ENCODE measurements at regions of chr5 and their contacts with region 1.

Region 1: DNA sequence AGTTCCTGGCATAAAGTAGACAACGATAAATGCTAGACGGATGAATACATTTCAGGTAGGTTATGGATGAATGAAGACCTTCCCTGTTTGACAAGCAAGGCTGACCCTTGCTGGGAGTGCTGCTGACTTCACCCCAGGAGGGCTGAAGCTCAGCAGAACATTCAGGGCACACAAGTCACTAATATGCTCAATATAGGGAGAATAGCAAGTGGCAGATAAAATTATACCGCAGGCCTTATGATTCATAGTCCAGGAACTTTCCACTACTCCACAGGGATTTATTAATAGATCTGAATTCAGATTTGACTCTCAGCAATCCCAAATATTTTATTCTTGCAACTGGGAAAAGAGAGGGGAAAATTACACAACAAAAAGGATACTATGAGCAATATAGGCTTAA is 38.2 kb upstream of the GRAMD2B start:
- DNase-seq: peak; percentile 52 to 93
- H3K4me3 ChIP-seq: peak overlapping the region; percentile 32; the same call in 1 of the 2 replicates
- H3K27ac ChIP-seq: peak overlapping the region; percentile 89
- H3K4me1 ChIP-seq: peaks cover 53% of the 10 kb centered on the region
- H3K27me3 ChIP-seq: no peaks in the 10 kb centered on the region
- CTCF ChIP-seq: no peak

Region 2: DNA sequence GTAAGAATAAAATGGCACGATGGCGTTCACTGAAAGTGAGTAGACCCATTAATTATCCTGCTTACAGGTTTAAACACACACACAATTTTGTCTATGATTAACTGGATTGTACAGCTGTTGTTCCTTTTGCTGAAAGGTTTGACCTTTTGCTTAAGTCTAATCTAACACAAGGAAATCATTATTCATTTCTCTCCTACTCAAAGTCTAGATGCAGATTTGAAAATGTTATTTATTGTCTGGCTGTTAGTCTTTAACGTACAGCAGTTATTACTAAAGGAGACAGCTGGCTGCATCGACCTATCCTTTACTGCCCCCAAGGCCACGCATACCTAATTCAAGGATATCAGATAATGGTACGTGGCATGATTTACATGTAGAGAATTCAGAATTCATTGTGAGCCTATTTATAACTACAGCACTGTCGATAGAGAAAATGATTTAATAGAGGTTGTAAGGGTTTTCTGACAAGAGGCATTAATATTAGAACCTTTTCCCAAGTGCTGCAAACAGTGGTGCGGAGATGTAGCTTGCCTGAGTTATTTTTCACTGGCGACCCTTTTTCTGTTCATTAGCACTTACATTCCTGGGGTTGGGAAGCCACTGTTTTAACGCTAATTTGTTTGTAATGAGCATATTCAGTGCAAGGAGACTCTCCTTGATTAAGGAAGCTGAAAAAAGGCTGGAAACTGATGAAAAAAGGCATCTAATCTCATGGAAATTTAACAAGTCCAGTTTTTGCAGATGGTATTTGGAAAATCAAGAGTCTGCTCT is 330.2 kb before region 1 on chr5:
- CTCF ChIA-PET with region 1: no interaction called
- POLR2A ChIA-PET with region 1: no interaction called
- intact Hi-C with region 1: no loop called
- DNase-seq: no peak
- H3K4me3 ChIP-seq: no peak overlapping the region
- H3K27ac ChIP-seq: no peak overlapping the region
- H3K4me1 ChIP-seq: no peaks in the 10 kb centered on the region
- H3K27me3 ChIP-seq: no peaks in the 10 kb centered on the region
- CTCF ChIP-seq: no peak

Region 3: GRCh38 chr5:126368239-126368892 is 16.6 kb before region 1 on chr5:
- CTCF ChIA-PET with region 1: interaction called, 5 read pairs
- POLR2A ChIA-PET with region 1: no interaction called
- intact Hi-C with region 1: loop called (anchors 1 kb)
- DNase-seq: peak; percentile 63 to 83
- H3K4me3 ChIP-seq: no peak overlapping the region
- H3K27ac ChIP-seq: peak overlapping the region; percentile 2; the same call in 1 of the 2 replicates
- H3K4me1 ChIP-seq: peaks cover 67% of the 10 kb centered on the region
- H3K27me3 ChIP-seq: no peaks in the 10 kb centered on the region
- CTCF ChIP-seq: no peak

Region 4: GRCh38 chr5:126446498-126447224 is 61.7 kb after region 1 on chr5:
- CTCF ChIA-PET with region 1: no interaction called
- POLR2A ChIA-PET with region 1: interaction called, 10 read pairs
- intact Hi-C with region 1: loop called (anchors 1 kb)
- DNase-seq: peak; percentile 63 to 77
- H3K4me3 ChIP-seq: no peak overlapping the region
- H3K27ac ChIP-seq: peak overlapping the region; percentile 83
- H3K4me1 ChIP-seq: peaks cover 17% of the 10 kb centered on the region
- H3K27me3 ChIP-seq: no peaks in the 10 kb centered on the region
- CTCF ChIP-seq: no peak

Measured in PC-9 (cell line).